ENCODE measurements at regions of chr19 and their contacts with region 1.

Region 1: DNA sequence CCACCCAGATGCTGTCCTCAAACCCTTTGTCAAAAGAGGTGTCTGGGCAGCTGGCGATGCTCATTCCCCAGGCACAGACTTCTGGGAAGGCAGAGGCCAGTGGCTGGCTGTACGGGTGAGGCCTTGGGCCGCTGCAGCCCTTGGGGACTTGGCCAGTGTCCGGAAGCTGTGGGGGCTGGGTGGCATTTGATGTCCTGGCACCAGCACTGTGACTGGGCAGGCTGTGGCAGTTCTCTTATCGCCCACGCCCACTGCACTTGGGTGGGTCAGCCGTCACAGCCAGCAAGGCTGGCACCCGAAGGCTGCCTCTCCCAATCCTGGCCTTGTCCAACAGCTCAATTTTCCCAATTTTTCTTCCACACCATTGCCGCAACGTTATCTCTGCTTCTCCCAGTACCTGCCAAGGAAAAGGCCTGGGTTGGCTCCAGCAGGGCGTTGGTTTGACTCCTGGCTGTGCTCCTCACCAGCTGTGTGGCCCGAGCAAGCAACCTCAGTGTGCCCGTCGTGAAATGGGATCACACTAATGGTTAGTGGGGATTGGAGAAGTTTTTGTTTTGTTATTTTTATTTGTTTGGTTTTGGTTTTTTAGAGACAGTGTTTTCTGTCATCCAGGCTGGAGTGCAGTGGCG is 12.7 kb upstream of the SLC44A2 start:
- DNase-seq: no peak
- ATAC-seq: no peak
- H3K4me3 ChIP-seq: no peak overlapping the region
- H3K27ac ChIP-seq: no peak overlapping the region
- H3K4me1 ChIP-seq: peaks cover 14 to 28% of the 10 kb centered on the region in 2 experiments
- H3K27me3 ChIP-seq: no peaks in the 10 kb centered on the region
- CTCF ChIP-seq: no peak
- EP300 ChIP-seq: no peak
- POLR2A ChIP-seq: no peak
- RAD21 ChIP-seq: no peak

Region 2: DNA sequence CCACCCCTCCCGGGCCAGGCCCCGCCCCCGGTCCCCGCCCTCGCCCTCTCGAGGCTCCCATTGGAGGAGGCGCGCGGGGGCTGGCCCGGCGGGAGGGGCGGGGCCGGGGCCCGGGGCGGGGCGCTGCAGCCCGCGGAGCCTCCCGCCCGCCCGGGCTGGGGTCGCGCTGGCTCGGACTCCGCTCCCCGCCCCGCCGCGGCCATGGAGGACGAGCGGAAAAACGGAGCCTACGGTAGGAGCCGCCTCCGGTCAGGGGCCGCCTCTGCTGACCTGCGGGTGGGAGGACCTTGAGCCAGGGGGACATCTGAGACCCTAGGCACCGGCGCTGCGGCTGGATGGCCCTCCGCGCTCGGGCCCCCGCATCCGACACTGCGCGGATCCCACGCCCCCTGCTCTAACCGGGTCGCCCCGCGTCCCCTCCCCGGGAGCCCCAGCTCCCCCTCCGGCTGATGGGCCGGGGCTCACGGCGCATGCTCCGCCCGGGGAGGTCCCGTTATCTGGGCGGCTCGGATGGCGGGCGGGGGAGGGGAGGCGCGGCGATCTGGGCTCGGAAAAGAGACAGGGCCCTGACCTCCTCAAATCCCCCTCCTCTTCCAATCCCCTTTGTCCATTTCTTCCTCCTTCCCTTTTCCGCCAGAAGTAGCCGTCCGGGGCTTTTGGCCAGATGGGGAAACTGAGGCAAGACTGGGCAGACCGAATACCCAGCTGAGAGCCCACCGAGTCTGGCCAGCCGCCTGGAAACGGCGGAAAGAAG is 10.1 kb before region 1 on chr19:
- CTCF ChIA-PET with region 1: no interaction called
- POLR2A ChIA-PET with region 1: interaction called, 18 read pairs
- in situ Hi-C with region 1: no loop called
- intact Hi-C with region 1: loop called (anchors 2 kb)
- DNase-seq: peak; percentile 86 to 99 (median 98)
- ATAC-seq: peak; percentile 97
- H3K4me3 ChIP-seq: peak overlapping the region; percentile 98
- H3K27ac ChIP-seq: peak overlapping the region; percentile 91
- H3K4me1 ChIP-seq: peaks cover 24 to 29% of the 10 kb centered on the region in 2 experiments
- H3K27me3 ChIP-seq: peaks cover 4 to 9% of the 10 kb centered on the region in 2 experiments; a peak in 3 of 5 replicates
- CTCF ChIP-seq: no peak
- EP300 ChIP-seq: no peak
- POLR2A ChIP-seq: peak; percentile 72
- RAD21 ChIP-seq: no peak

Measured in K562 (cell line).